Left ventricle myocardium superior (tissue), 1 donor: ENCODE measurements at regions of chr4 and their contacts with region 1.

Region 1: DNA sequence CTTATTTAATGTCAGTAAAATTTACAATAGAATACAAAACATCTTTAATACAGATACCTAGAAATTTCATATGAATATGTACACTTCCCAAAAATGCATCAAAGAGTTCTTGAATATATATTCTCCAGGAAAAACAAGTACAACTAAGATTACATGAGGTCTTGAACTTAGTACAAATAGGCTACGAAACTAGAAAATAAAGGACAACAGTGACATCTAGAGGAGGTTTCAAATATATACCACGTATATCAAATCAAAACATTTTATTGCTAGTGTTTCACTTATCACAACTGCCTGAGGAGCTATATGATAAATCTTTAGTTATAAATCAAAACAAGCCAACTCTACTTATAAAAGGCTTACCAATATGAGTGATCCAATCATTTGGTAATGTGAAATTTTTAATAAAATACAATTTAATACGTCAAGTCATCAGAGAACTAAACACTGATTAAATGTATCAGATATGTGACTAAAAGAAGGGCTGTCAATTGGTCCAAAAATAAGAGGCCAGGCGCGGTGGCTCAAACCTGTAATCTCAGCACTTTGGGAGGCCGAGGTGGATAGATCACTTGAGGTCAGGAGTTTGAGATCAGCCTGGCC is 36.6 kb downstream of the ANAPC10 start:
- DNase-seq: no peak
- ATAC-seq: peak; percentile 41

Region 2: DNA sequence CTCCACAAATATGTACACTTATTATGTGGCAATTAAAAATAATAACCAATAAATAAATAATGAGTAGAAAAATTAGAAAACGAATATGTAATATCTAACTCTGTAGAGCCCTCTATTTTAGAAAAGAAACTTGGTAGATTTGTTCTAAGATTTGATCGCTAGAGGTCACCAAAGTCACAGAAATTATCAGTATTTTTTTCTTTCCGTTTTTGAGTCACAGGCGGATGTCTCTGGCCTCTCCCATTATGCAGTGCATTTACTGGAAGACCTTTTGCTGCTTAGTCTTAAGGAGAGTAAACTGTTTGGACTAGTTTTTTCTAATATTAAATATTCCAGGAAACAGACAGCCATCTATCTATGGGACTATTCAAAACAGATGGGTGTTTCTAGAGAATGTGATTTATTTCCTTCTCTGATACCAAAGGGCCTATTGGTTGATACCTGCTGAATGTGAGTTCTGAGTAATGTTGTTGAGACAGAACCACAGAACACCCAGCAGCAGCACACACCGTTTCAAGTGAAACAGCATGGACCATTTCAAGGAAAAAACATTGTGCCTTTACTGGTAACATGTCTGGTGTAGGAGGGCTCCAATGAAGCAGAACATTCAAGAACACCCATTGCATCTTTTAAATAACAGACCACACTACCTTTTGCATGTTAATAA is 886.9 kb before region 1 on chr4:
- intact Hi-C with region 1: loop called (anchors 5 kb)
- DNase-seq: no peak
- ATAC-seq: peak; percentile 31

Region 3: GRCh38 chr4:144611846-144612245 is 449.6 kb before region 1 on chr4:
- intact Hi-C with region 1: loop called (anchors 10 kb)
- DNase-seq: no peak
- ATAC-seq: no peak

Region 4: DNA sequence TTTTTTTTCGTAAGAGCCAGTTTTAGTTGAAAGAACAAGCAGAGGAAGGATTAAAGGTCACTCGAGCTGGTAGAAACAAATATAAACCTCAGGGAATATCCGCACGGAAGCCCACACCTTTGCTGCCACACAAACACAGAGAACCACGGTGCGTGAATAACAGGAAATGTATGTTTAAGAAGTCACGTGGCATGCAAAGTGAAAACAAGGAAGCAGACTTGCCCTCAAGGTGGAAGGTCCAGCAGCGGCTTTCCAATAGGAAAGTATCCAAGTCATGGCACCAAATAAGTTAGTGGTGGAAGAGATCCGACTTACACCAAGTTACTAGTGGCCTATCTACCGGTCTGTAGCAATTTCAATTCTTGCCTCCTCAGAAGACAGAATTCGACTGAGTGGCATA is 199.9 kb before region 1 on chr4:
- intact Hi-C with region 1: no loop called
- DNase-seq: no peak
- ATAC-seq: no peak